Activated CD8-positive, alpha-beta T cell treated with anti-CD3 and anti-CD28 coated beads for 36 hours (primary cell): ENCODE measurements at regions of chr17 and their contacts with region 1.

Region 1: GRCh38 chr17:27805520-27806146 is 5.3 kb upstream of the NOS2 start:
- DNase-seq: peak; percentile 89
- ATAC-seq: peak; percentile 60
- H3K4me3 Mint-ChIP-seq: peak overlapping the region; percentile 55
- H3K27ac Mint-ChIP-seq: peak overlapping the region; percentile 84
- H3K4me1 Mint-ChIP-seq: peaks cover 45% of the 10 kb centered on the region
- H3K27me3 Mint-ChIP-seq: peaks cover under 1% of the 10 kb centered on the region
- CTCF ChIP-seq: peak; percentile 79

Region 2: GRCh38 chr17:27630607-27631410 is 174.8 kb before region 1 on chr17 and contains the start of gene LGALS9:
- CTCF ChIA-PET with region 1: no interaction called
- POLR2A ChIA-PET with region 1: no interaction called
- intact Hi-C with region 1: no loop called
- DNase-seq: peak; percentile 48
- ATAC-seq: peak; percentile 79
- H3K4me3 Mint-ChIP-seq: peak within 1 kb of the TSS; percentile 60
- H3K27ac Mint-ChIP-seq: peak within 1 kb of the TSS; percentile 79
- H3K4me1 Mint-ChIP-seq: peaks cover 27% of the 10 kb centered on the region
- H3K27me3 Mint-ChIP-seq: no peaks in the 10 kb centered on the region
- CTCF ChIP-seq: no peak
- total RNA-seq, gene LGALS9: 17.3 to 18.4 TPM

Region 3: GRCh38 chr17:27747462-27748359 is 57.9 kb before region 1 on chr17:
- CTCF ChIA-PET with region 1: no interaction called
- POLR2A ChIA-PET with region 1: no interaction called
- intact Hi-C with region 1: no loop called
- DNase-seq: no peak
- ATAC-seq: no peak
- H3K4me3 Mint-ChIP-seq: no peak overlapping the region
- H3K27ac Mint-ChIP-seq: no peak overlapping the region
- H3K4me1 Mint-ChIP-seq: no peaks in the 10 kb centered on the region
- H3K27me3 Mint-ChIP-seq: no peaks in the 10 kb centered on the region
- CTCF ChIP-seq: no peak

Region 4: GRCh38 chr17:27793168-27793905 is 12.3 kb before region 1 on chr17:
- CTCF ChIA-PET with region 1: interaction called, 17 read pairs
- POLR2A ChIA-PET with region 1: interaction called, 3 read pairs
- intact Hi-C with region 1: no loop called
- DNase-seq: no peak
- ATAC-seq: peak; percentile 47
- H3K4me3 Mint-ChIP-seq: no peak overlapping the region
- H3K27ac Mint-ChIP-seq: no peak overlapping the region
- H3K4me1 Mint-ChIP-seq: peaks cover 4% of the 10 kb centered on the region
- H3K27me3 Mint-ChIP-seq: peaks cover 29% of the 10 kb centered on the region
- CTCF ChIP-seq: no peak

Region 5: GRCh38 chr17:27832831-27833230 is 27.2 kb after region 1 on chr17:
- CTCF ChIA-PET with region 1: interaction called, 12 read pairs
- POLR2A ChIA-PET with region 1: no interaction called
- intact Hi-C with region 1: no loop called
- DNase-seq: no peak
- ATAC-seq: no peak
- H3K4me3 Mint-ChIP-seq: no peak overlapping the region
- H3K27ac Mint-ChIP-seq: no peak overlapping the region
- H3K4me1 Mint-ChIP-seq: no peaks in the 10 kb centered on the region
- H3K27me3 Mint-ChIP-seq: peaks cover 4% of the 10 kb centered on the region
- CTCF ChIP-seq: no peak

Region 6: GRCh38 chr17:27862004-27862403 is 56.4 kb after region 1 on chr17:
- CTCF ChIA-PET with region 1: interaction called, 47 read pairs
- POLR2A ChIA-PET with region 1: interaction called, 6 read pairs
- intact Hi-C with region 1: loop called (anchors 5 kb)
- DNase-seq: peak; percentile 14
- ATAC-seq: peak; percentile 75
- H3K4me3 Mint-ChIP-seq: no peak overlapping the region
- H3K27ac Mint-ChIP-seq: no peak overlapping the region
- H3K4me1 Mint-ChIP-seq: peaks cover 13% of the 10 kb centered on the region
- H3K27me3 Mint-ChIP-seq: no peaks in the 10 kb centered on the region
- CTCF ChIP-seq: no peak

Region 7: GRCh38 chr17:27879987-27880608 is 74.5 kb after region 1 on chr17:
- CTCF ChIA-PET with region 1: interaction called, 601 read pairs
- POLR2A ChIA-PET with region 1: interaction called, 12 read pairs
- intact Hi-C with region 1: loop called (anchors 5 kb)
- DNase-seq: peak; percentile 83
- ATAC-seq: peak; percentile 87
- H3K4me3 Mint-ChIP-seq: no peak overlapping the region
- H3K27ac Mint-ChIP-seq: peak overlapping the region; percentile 55
- H3K4me1 Mint-ChIP-seq: peaks cover 19% of the 10 kb centered on the region
- H3K27me3 Mint-ChIP-seq: no peaks in the 10 kb centered on the region
- CTCF ChIP-seq: peak; percentile 86

Region 8: DNA sequence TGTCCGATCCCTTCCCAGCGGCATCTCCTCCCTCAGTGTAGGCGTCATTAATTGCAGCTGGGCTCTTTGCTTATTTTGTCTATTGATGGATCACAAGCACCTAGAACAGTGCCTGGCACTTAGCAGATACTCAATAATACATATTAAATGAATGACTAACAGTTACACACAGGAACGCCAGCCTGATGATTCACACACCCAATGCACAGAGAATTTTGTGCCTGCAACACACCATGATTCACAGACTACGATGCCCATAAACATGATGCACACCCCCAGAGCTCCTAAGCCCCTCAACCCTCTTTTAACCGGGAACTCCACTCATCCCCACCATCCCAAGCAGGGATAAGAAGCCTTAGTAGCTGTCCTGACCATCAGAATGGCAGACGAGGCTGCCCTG is 446.8 kb after region 1 on chr17:
- CTCF ChIA-PET with region 1: interaction called, 11 read pairs
- POLR2A ChIA-PET with region 1: no interaction called
- intact Hi-C with region 1: no loop called
- DNase-seq: no peak
- ATAC-seq: no peak
- H3K4me3 Mint-ChIP-seq: no peak overlapping the region
- H3K27ac Mint-ChIP-seq: no peak overlapping the region
- H3K4me1 Mint-ChIP-seq: peaks cover 3% of the 10 kb centered on the region
- H3K27me3 Mint-ChIP-seq: peaks cover 22% of the 10 kb centered on the region
- CTCF ChIP-seq: no peak